Common myeloid progenitor, CD34-positive (primary cell): ENCODE measurements at regions of chr16 and their contacts with region 1.

Region 1: GRCh38 chr16:11768849-11769248 is 26.2 kb upstream of the TXNDC11 start:
- DNase-seq: peak; percentile 44 to 86 (median 73)
- H3K4me3 ChIP-seq: peak overlapping the region in 5 of 7 experiments; percentile 9 to 60 (median 48)
- H3K27ac ChIP-seq: peak overlapping the region; percentile 40 to 75
- H3K4me1 ChIP-seq: peaks cover 4 to 14% (median 8%) of the 10 kb centered on the region in 4 experiments
- H3K27me3 ChIP-seq: no peaks in the 10 kb centered on the region

Region 2: GRCh38 chr16:11783319-11784037 is 14.6 kb after region 1 on chr16:
- CTCF ChIA-PET with region 1: interaction called, 25 read pairs
- POLR2A ChIA-PET with region 1: no interaction called
- DNase-seq: peak; percentile 50 to 87 (median 84)
- H3K4me3 ChIP-seq: peak overlapping the region in 5 of 7 experiments; percentile 3 to 72 (median 50)
- H3K27ac ChIP-seq: peak overlapping the region; percentile 67 to 85
- H3K4me1 ChIP-seq: peaks cover 3 to 32% (median 20%) of the 10 kb centered on the region in 4 experiments
- H3K27me3 ChIP-seq: no peaks in the 10 kb centered on the region

Region 3: GRCh38 chr16:11797166-11797956 is 28.5 kb after region 1 on chr16 and contains the start of gene ZC3H7A:
- CTCF ChIA-PET with region 1: interaction called, 12 read pairs
- POLR2A ChIA-PET with region 1: interaction called, 3 read pairs
- DNase-seq: peak; percentile 95 to 97 (median 97)
- H3K4me3 ChIP-seq: peak within 1 kb of the TSS; percentile 72 to 98 (median 93)
- H3K27ac ChIP-seq: peak within 1 kb of the TSS; percentile 92 to 96
- H3K4me1 ChIP-seq: peaks cover 12 to 62% (median 50%) of the 10 kb centered on the region in 4 experiments
- H3K27me3 ChIP-seq: no peaks in the 10 kb centered on the region